Activated B cell treated with CpG ODN at 0.5 μM for 24 hours (primary cell): ENCODE measurements at regions of chr9 and their contacts with region 1.

Region 1: GRCh38 chr9:114505187-114506081 is at the start of gene WHRN:
- DNase-seq: peak; percentile 84
- ATAC-seq: peak; percentile 85
- H3K4me3 Mint-ChIP-seq: peak within 1 kb of the TSS; percentile 86
- H3K27ac Mint-ChIP-seq: peak within 1 kb of the TSS; percentile 79
- H3K4me1 Mint-ChIP-seq: peaks cover 51% of the 10 kb centered on the region
- H3K27me3 Mint-ChIP-seq: peaks cover 8% of the 10 kb centered on the region
- CTCF ChIP-seq: no peak
- total RNA-seq, gene WHRN: 12.4 and 14.5 TPM in 2 replicates

Region 2: GRCh38 chr9:114339130-114339908 is 166.1 kb before region 1 on chr9:
- CTCF ChIA-PET with region 1: interaction called, 15 read pairs
- POLR2A ChIA-PET with region 1: no interaction called
- intact Hi-C with region 1: loop called (anchors 1 kb)
- DNase-seq: peak; percentile 68
- ATAC-seq: peak; percentile 79
- H3K4me3 Mint-ChIP-seq: peak overlapping the region; percentile 6
- H3K27ac Mint-ChIP-seq: peak overlapping the region; percentile 74
- H3K4me1 Mint-ChIP-seq: peaks cover 32% of the 10 kb centered on the region
- H3K27me3 Mint-ChIP-seq: no peaks in the 10 kb centered on the region
- CTCF ChIP-seq: peak; percentile 87

Region 3: DNA sequence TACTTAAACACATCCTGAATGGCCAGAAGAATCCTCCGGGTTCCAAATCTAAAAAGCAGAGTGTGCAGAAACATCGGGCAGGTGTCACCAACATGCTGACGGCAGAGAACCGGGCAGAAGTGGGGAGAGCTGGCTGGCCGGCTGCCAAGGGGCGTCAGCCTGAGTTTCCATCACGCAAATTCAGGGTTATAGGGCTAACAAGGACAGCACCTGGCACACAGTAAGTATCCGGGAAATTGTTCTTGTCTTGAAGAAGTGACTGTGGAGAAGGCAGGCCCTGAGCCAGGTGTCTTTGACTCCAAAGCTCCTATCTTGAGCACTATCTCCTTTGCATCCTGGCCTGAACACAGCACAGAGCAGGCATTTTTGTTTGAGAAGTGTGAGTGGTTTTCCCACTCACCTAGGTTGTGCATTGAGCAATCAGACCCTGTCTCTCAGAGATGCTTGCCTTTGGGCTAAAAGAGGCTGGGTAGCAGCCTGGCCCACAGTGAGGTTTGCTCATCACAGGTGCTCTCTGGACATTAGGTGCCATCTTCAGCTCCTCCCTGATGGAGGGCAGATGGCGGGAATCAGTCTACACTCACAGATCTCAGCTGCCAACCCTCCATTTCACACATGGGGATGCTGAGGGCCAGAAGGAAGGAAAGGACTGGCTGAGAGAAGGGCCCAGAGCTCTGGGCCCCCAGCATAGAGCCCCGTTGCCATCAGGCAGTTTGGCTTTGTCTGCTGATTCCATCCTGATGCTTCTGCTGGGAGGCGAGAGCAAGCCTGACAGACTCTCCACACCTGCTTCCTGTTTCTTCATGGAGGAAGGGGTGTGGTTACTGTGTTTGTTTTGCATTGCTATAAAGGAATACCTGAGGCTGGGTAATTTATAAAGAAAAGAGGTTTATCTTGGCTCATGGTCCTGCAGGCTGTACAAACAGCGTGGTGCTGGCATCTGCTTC is 52.9 kb before region 1 on chr9:
- CTCF ChIA-PET with region 1: interaction called, 5 read pairs
- POLR2A ChIA-PET with region 1: interaction called, 8 read pairs
- intact Hi-C with region 1: loop called (anchors 1 kb)
- DNase-seq: peak; percentile 61
- ATAC-seq: peak; percentile 35
- H3K4me3 Mint-ChIP-seq: peak overlapping the region; percentile 55
- H3K27ac Mint-ChIP-seq: peak overlapping the region; percentile 95
- H3K4me1 Mint-ChIP-seq: peaks cover 61% of the 10 kb centered on the region
- H3K27me3 Mint-ChIP-seq: no peaks in the 10 kb centered on the region
- CTCF ChIP-seq: no peak

Region 4: DNA sequence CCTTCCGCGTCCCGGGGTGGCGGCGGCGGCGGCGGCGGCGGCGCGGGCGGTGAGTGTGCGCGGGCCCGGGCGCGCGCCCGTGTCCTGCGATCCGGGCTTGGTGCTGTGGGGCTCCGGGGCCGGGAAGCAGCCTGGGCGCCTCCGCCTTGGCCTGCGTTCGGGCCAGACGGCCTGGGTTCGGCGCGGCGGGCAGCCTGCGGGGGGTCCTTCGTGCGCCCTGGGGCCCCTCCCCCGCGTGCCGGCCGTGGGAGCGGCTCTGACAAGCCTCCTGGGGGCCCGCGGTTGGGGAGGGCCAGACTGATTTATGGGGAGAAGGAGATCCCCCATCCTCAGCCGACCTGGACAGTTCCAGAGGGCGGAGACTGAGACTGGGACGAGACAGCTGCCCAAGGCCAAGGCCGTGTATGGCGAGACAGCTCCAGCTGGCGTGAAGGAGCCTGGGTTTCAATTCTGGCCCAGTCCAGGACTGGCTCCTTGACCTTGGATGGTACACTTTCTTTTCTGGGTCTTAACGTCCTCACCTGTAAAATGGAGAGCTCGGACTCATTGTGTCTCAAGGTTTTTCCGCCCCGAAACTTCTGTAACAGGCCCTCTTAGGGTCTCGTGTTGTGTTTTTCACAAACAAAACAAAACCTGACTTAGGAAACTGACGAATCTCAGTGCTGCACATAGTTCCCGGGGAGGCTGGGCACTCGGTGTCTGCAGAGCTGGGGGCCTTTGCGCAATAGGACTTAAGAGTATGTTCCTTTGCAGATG is 106.3 kb after region 1 on chr9:
- CTCF ChIA-PET with region 1: no interaction called
- POLR2A ChIA-PET with region 1: interaction called, 6 read pairs
- intact Hi-C with region 1: loop called (anchors 2 kb)
- DNase-seq: no peak
- ATAC-seq: peak; percentile 51
- H3K4me3 Mint-ChIP-seq: peak overlapping the region; percentile 90
- H3K27ac Mint-ChIP-seq: peak overlapping the region; percentile 95
- H3K4me1 Mint-ChIP-seq: peaks cover 85% of the 10 kb centered on the region
- H3K27me3 Mint-ChIP-seq: no peaks in the 10 kb centered on the region
- CTCF ChIP-seq: no peak

Region 5: GRCh38 chr9:114653556-114654159 is 148.2 kb after region 1 on chr9:
- CTCF ChIA-PET with region 1: interaction called, 18 read pairs
- POLR2A ChIA-PET with region 1: no interaction called
- intact Hi-C with region 1: no loop called
- DNase-seq: peak; percentile 55
- ATAC-seq: peak; percentile 98
- H3K4me3 Mint-ChIP-seq: no peak overlapping the region
- H3K27ac Mint-ChIP-seq: no peak overlapping the region
- H3K4me1 Mint-ChIP-seq: peaks cover 23% of the 10 kb centered on the region
- H3K27me3 Mint-ChIP-seq: no peaks in the 10 kb centered on the region
- CTCF ChIP-seq: peak; percentile 61